ENCODE measurements at regions of chr6 and their contacts with region 1.

Region 1: GRCh38 chr6:99822741-99823512 is 171.1 kb downstream of the MCHR2 start:
- DNase-seq: peak; percentile 69
- H3K4me3 ChIP-seq: peak overlapping the region in 2 of 3 experiments; percentile 17 to 30
- H3K27ac ChIP-seq: no peak overlapping the region
- H3K4me1 ChIP-seq: peaks cover 9% of the 10 kb centered on the region
- H3K27me3 ChIP-seq: no peaks in the 10 kb centered on the region
- CTCF ChIP-seq: peak; percentile 66 to 75

Region 2: GRCh38 chr6:99746261-99746895 is 76.5 kb before region 1 on chr6:
- CTCF ChIA-PET with region 1: no interaction called
- dilution Hi-C with region 1: no loop called
- in situ Hi-C with region 1: no loop called
- intact Hi-C with region 1: loop called (anchors 5 kb)
- DNase-seq: peak; percentile 61
- H3K4me3 ChIP-seq: no peak overlapping the region
- H3K27ac ChIP-seq: no peak overlapping the region
- H3K4me1 ChIP-seq: peaks cover 13% of the 10 kb centered on the region
- H3K27me3 ChIP-seq: peaks cover 2% of the 10 kb centered on the region
- CTCF ChIP-seq: peak; percentile 85 to 90

Measured in mammary epithelial cell (primary cell).